ENCODE measurements at regions of chr10 and their contacts with region 1.

Region 1: DNA sequence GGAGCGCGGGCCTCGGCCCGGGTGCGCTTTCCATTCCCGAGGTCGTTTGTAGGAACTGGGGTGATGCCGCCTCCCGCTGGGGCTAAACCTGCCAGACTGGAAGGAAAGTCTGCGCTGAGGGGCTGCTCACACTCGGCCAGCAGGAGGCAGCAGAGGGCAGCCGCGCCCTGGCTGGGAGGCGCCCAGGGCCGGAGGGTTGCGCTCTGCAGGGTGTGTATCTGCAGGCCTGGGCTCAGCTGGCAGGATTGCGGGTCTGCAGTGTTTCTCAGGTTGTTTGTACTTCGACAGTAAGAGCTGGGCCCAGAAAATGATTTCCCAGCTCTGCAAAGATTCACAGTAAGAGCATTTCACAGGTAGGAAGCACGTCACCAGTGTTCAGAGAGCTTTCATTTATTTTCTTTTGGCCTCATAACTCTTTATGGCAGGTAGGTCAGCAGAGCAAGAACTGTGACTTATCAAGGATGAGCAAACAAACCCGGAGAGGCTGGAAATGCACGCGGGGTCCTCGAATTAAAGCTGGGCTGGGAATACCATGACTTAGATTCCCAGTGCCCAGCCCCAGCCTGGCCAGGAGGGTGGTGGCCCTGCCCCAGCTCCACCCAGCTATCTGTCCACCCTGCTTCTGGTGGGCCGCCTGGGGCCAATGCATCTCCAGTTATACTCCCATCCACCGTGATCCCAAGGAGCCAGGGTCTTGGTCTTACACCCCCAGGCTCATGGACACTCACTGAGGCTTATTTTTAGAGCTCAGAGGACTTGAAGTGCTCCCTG is 15.2 kb upstream of the PPP2R2D start:
- DNase-seq: peak in 1 of 2 donors; percentile 84
- H3K4me3 ChIP-seq: no peak overlapping the region
- H3K27ac ChIP-seq: no peak overlapping the region
- H3K4me1 ChIP-seq: no peaks in the 10 kb centered on the region
- H3K27me3 ChIP-seq: no peaks in the 10 kb centered on the region
- CTCF ChIP-seq: peak; percentile 88 to 97 (median 90)

Region 2: DNA sequence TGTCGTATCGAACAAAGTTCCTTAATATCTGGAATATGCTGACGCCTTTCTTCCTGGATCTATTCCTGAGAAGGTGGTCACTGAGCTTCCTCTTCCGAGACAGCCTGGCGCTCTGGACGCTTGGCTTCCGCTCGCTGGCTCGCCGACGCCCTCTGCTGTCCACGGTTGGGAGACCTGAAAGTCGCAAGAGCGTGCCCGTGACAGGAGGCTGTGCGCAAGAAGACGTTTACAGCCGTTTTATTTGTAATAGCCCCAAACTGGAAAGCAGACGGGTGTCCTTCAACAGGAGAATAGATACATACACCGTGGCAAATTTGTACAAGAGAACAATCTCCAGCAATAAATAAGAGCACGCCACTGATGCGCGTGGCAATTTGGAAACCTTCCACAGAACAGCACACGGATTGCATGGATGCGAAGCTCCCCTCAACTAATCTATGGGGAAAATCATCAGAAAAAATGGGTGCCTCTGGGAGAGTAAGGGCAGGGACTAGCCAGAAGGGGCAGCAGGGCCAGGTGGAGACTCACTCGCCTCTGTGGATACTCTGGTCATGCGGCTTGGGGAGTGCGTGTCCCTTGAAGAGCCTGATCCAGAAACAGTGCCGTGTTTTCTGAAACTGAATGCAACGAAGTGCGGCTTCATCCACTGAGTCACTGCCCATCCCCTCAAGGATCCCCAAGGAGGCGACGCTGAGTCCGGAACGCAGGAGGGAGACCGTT is 137.7 kb after region 1 on chr10:
- intact Hi-C with region 1: loop called (anchors 1 kb)
- DNase-seq: peak in 1 of 2 donors; percentile 83
- H3K4me3 ChIP-seq: peak overlapping the region; percentile 26 to 34
- H3K27ac ChIP-seq: no peak overlapping the region
- H3K4me1 ChIP-seq: peaks cover 0 to 4% of the 10 kb centered on the region in 2 donors
- H3K27me3 ChIP-seq: no peaks in the 10 kb centered on the region
- CTCF ChIP-seq: peak; percentile 64 to 94 (median 82)

Region 3: DNA sequence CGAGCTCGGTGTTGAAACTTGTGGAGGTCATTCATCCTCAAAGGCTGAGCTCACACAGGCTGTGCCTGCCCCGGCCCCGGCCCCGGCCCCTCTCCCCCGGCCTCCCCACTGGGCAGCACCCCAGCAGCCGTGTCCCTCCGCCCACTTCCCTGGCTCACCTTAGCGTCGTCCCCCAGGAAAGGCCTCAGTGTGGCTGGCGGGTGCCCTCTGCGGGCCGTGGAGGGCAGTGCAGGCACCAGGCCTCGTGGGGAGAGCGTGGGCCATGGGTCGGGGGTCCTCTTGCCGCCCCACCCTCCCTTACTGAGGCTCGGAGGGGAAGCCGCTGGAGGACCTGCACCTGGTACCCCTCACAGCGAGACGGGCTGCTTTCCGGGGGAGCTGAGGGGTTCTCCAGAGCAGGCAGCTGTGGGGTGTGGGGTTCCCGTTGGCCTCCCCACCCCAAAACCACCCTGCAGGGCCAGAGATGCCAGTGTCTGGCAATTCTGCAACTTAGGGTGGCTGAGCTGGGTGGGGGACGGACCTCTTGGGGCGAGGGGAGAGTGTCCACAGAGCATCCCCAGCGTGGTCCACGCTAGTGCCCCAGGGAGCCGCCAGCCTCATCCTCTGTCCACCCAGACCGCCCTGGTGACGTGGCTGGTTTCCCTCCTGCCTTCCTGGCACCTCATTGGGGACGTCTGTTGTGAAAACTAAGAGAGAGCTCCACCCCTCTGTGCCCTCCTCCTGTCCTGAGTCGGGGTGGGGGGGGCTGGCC is 257.0 kb after region 1 on chr10:
- intact Hi-C with region 1: loop called (anchors 5 kb)
- DNase-seq: no peak
- H3K4me3 ChIP-seq: no peak overlapping the region
- H3K27ac ChIP-seq: no peak overlapping the region
- H3K4me1 ChIP-seq: no peaks in the 10 kb centered on the region
- H3K27me3 ChIP-seq: no peaks in the 10 kb centered on the region
- CTCF ChIP-seq: peak; percentile 20 to 79 (median 59)